BJ (cell line): ENCODE measurements at regions of chr3 and their contacts with region 1.

Region 1: DNA sequence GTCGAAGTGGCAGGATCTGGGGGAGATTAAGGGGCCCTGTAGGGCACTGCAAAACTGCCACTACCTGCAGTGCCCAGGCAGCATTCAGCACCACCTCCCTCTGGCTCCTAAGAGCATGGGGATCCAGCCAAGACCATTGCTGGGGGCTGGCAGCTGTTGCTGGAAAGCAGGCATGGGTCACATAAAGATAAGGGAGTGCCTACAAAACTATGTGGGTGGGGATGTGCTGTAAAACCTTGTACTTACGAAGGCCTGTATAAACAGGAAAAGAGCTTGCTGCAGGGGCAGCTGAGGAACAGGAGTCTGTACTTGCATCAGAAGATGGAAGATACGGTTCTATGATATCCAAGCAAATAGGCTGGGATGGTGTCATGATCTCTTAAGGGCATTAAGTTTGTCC is 27.1 kb downstream of the IL20RB start:
- DNase-seq: no peak
- H3K4me3 ChIP-seq: no peak overlapping the region
- H3K27me3 ChIP-seq: no peaks in the 10 kb centered on the region
- CTCF ChIP-seq: no peak

Region 2: GRCh38 chr3:136938334-136938733 is 46.5 kb before region 1 on chr3:
- CTCF ChIA-PET with region 1: no interaction called
- POLR2A ChIA-PET with region 1: interaction called, 11 read pairs
- DNase-seq: no peak
- H3K4me3 ChIP-seq: no peak overlapping the region
- H3K27me3 ChIP-seq: no peaks in the 10 kb centered on the region
- CTCF ChIP-seq: no peak

Region 3: GRCh38 chr3:137105277-137105977 is 120.6 kb after region 1 on chr3:
- CTCF ChIA-PET with region 1: no interaction called
- POLR2A ChIA-PET with region 1: no interaction called
- DNase-seq: peak; percentile 8
- H3K4me3 ChIP-seq: no peak overlapping the region
- H3K27me3 ChIP-seq: peaks cover 8% of the 10 kb centered on the region; the same call in 1 of the 2 replicates
- CTCF ChIP-seq: peak; percentile 62